Activated T-helper 2 cell treated with anti-CD3 and anti-CD28 coated beads, Interferon-gamma antibody, Interleukin-2, Interleukin-4, amounts not matched to agents 10 μg/mL and 5 μg/mL and 100 μg/mL, durations not matched to agents 14 hours and 24 hours and 36 hours (primary cell): ENCODE measurements at regions of chr9 and their contacts with region 1.

Region 1: GRCh38 chr9:136533775-136534157 is 12.1 kb downstream of the NOTCH1 start:
- DNase-seq: peak; percentile 73
- H3K4me3 Mint-ChIP-seq: peak overlapping the region; percentile 70
- H3K27ac Mint-ChIP-seq: peak overlapping the region; percentile 90
- H3K4me1 Mint-ChIP-seq: peaks cover 30% of the 10 kb centered on the region
- H3K27me3 Mint-ChIP-seq: no peaks in the 10 kb centered on the region

Region 2: DNA sequence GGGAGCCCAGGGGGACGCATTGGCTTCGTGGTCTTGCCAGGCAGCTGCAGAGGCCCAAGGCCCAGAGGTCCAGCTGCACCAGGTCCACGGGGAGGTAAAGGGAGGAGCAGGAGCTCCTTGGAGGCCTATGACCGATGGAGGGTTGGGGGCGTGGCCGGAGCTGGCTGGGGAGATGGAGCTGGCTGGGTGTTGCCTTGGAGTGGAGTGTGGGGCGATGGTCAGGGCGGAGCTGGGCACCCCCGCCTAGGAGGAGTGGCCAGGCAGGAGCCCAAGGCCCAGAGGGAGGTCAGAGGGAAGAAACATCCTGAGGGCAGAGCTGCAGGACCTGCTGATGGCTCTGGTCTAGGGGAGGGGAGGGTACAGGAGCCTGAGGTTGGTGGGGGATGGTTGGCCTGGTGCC is 787.2 kb before region 1 on chr9:
- intact Hi-C with region 1: no loop called
- DNase-seq: no peak
- H3K4me3 Mint-ChIP-seq: no peak overlapping the region
- H3K27ac Mint-ChIP-seq: no peak overlapping the region
- H3K4me1 Mint-ChIP-seq: no peaks in the 10 kb centered on the region
- H3K27me3 Mint-ChIP-seq: no peaks in the 10 kb centered on the region

Region 3: GRCh38 chr9:136493567-136493971 is 40.2 kb before region 1 on chr9:
- intact Hi-C with region 1: no loop called
- DNase-seq: no peak
- H3K4me3 Mint-ChIP-seq: no peak overlapping the region
- H3K27ac Mint-ChIP-seq: no peak overlapping the region
- H3K4me1 Mint-ChIP-seq: no peaks in the 10 kb centered on the region
- H3K27me3 Mint-ChIP-seq: no peaks in the 10 kb centered on the region

Region 4: GRCh38 chr9:136544964-136545692 is 11.4 kb after region 1 on chr9:
- intact Hi-C with region 1: loop called (anchors 1 kb)
- DNase-seq: peak; percentile 67
- H3K4me3 Mint-ChIP-seq: peak overlapping the region; percentile 91
- H3K27ac Mint-ChIP-seq: peak overlapping the region; percentile 65
- H3K4me1 Mint-ChIP-seq: peaks cover 20% of the 10 kb centered on the region
- H3K27me3 Mint-ChIP-seq: no peaks in the 10 kb centered on the region

Region 5: GRCh38 chr9:136742591-136743391 is 209.0 kb after region 1 on chr9 and contains the start of gene LCN10:
- intact Hi-C with region 1: no loop called
- DNase-seq: no peak
- H3K4me3 Mint-ChIP-seq: no peak within 1 kb of the TSS
- H3K27ac Mint-ChIP-seq: no peak within 1 kb of the TSS
- H3K4me1 Mint-ChIP-seq: peaks cover 7% of the 10 kb centered on the region
- H3K27me3 Mint-ChIP-seq: no peaks in the 10 kb centered on the region
- total RNA-seq, gene LCN10: 1.2 and 1.7 TPM in 2 replicates